ENCODE measurements at regions of chr4 and their contacts with region 1.

Region 1: GRCh38 chr4:75673027-75673958 is at the start of gene G3BP2:
- DNase-seq: peak; percentile 99
- H3K4me3 ChIP-seq: peak within 1 kb of the TSS; percentile 85 to 98 (median 92)
- H3K27ac ChIP-seq: peak within 1 kb of the TSS; percentile 97 to 99 (median 98)
- H3K4me1 ChIP-seq: peaks cover 0 to 41% (median 35%) of the 10 kb centered on the region in 4 donors
- H3K27me3 ChIP-seq: no peaks in the 10 kb centered on the region
- CTCF ChIP-seq: no peak
- EP300 ChIP-seq: peak in 2 of 4 donors; percentile 40 to 41
- POLR2A ChIP-seq: peak; percentile 85 to 90
- total RNA-seq, gene G3BP2: 102 to 141 (median 119) TPM

Region 2: GRCh38 chr4:75251547-75251946 is 421.7 kb before region 1 on chr4:
- intact Hi-C with region 1: no loop called
- DNase-seq: no peak
- H3K4me3 ChIP-seq: no peak overlapping the region
- H3K27ac ChIP-seq: no peak overlapping the region
- H3K4me1 ChIP-seq: peaks cover 0 to 25% (median 14%) of the 10 kb centered on the region in 4 donors
- H3K27me3 ChIP-seq: no peaks in the 10 kb centered on the region
- CTCF ChIP-seq: no peak
- EP300 ChIP-seq: no peak
- POLR2A ChIP-seq: no peak

Region 3: DNA sequence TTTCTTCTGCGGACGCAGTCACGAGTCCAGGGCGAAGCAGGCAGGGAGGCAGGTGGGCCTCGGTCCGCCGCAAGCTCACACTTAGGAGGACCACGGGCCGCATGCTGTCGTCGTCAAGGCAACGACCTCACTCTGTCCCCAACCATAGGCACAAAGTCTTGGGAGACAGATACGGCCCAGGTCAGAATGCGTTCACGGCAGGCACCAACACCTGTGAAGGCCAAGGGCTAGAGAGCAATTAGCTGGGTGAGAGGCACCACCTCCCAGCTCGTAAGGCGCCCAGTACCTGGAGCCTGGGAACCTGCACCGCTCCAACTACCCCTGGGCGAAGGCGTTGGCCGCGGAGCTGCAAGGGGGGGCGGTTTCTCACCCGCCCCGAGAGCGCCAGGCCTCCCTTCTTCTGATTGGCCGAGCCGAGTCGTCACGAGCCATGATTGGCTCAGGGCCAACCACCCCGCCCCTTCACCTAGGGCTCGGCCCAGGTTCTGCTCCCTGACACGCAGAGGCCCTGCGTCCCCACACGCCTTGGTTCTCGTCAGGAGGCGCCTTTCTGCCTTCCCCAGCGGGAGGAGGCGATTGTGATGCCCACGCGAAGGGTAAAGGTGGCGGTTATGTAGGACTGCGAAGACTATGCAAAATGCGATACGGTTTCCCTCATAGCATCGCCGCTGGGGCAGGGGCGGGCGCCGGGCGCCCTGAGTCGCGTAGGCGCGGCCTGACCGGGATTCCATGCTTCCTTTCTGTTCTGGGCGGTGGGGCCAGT is 42.9 kb before region 1 on chr4 and contains the start of gene CDKL2:
- intact Hi-C with region 1: loop called (anchors 5 kb)
- DNase-seq: peak; percentile 93
- H3K4me3 ChIP-seq: peak within 1 kb of the TSS; percentile 53 to 70 (median 60)
- H3K27ac ChIP-seq: peak within 1 kb of the TSS; percentile 18 to 70 (median 60)
- H3K4me1 ChIP-seq: peaks cover 0 to 20% (median 7%) of the 10 kb centered on the region in 4 donors
- H3K27me3 ChIP-seq: no peaks in the 10 kb centered on the region
- CTCF ChIP-seq: no peak
- EP300 ChIP-seq: no peak
- POLR2A ChIP-seq: peak in 1 of 2 donors; percentile 37
- total RNA-seq, gene CDKL2: 1.1 to 11.9 (median 3.7) TPM

Region 4: GRCh38 chr4:75724066-75724866 is 51.0 kb after region 1 on chr4 and contains the start of gene USO1:
- intact Hi-C with region 1: loop called (anchors 1 kb)
- DNase-seq: peak; percentile 99
- H3K4me3 ChIP-seq: peak within 1 kb of the TSS; percentile 74 to 94 (median 87)
- H3K27ac ChIP-seq: peak within 1 kb of the TSS; percentile 96 to 99 (median 98)
- H3K4me1 ChIP-seq: peaks cover 0 to 56% (median 45%) of the 10 kb centered on the region in 4 donors
- H3K27me3 ChIP-seq: no peaks in the 10 kb centered on the region
- CTCF ChIP-seq: peak; percentile 61 to 80 (median 66)
- EP300 ChIP-seq: no peak
- POLR2A ChIP-seq: peak; percentile 95 to 98
- total RNA-seq, gene USO1: 66.5 to 99.4 (median 77.6) TPM